Activated CD4-positive, alpha-beta T cell treated with anti-CD3 and anti-CD28 coated beads, Interleukin-2, amount 10 ng/mL, durations not matched to agents 24 days and 14 days (primary cell): ENCODE measurements at regions of chr21 and their contacts with region 1.

Region 1: DNA sequence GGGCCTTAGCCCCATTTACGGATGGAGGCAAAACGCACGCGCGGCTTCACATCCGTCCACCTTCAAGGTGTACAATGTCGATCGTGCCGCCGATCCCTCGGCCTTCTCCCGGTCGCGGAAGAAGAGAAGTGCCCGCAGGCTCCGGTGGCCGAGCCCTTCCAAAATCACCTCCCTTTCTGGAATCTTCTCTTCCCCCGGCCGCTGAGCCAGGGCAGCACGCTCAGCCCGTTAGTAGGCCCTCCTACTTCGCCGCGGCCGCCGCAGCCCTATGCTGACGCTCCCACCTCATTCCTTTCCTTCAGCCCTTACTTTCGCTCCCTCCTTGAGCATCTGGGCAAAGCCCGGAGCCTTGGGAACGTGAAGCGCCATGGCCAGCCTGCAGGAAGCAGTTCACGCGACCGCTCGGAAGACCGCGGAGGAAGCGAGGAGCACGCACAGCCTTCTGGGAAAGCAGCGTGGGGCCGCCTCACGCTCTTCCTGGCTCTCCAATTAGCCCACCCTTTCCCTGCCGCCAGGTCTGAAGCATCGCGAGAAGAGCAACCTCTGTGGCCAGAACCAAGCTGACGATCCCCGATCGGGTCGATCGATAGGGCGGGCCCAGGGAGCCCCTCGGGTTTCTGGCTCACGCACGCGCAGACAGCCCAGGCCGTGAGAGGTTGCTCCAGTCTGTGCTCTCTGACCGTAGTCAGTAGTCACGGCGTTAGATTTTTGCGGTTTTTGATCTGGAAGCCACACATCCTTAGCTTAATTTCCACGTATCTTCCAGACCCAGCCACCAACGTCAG is at the start of gene CCT8:
- DNase-seq: peak; percentile 99
- H3K4me3 Mint-ChIP-seq: peak within 1 kb of the TSS; percentile 100
- H3K27ac Mint-ChIP-seq: peak within 1 kb of the TSS; percentile 99
- H3K4me1 Mint-ChIP-seq: peaks cover 47% of the 10 kb centered on the region
- H3K27me3 Mint-ChIP-seq: no peaks in the 10 kb centered on the region
- total RNA-seq, gene CCT8: 432 and 438 TPM in 2 replicates

Region 2: DNA sequence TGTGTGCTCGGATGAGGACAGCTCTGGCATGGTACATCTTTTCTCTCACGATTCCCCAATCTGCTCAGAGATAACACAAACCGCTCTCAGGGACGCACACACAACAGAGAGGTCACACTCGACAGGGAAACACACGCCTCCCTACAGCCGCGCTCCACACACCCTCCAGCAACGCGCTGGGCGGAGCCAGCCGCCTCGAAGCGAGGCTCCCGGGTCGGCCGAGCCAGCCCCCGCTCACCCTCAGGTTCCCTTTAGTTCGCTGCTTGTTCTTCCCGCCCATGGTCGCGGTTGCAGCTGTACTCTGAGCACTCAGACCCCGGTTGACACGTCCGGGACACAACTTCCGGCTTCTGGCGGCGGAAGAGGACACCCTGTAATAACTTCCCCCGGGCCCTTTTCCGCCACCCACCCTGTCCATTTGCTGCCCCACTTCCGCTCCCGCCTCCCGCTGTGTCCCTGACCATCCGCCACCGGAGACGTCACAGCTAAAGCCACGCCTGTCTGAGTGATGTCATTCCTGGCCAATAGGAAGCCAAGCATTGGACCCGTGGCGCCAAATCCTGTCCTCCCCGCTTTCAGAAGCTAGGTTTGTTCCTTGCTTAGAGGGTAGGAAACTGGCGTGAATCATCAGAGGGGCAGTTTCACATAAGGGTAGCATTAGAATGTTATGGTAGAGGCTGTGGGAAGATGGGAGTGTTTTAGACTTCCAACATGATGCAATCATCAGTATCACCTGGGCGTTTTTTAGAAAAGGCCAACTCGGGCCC is 80.7 kb before region 1 on chr21 and contains the start of gene LTN1:
- intact Hi-C with region 1: loop called (anchors 1 kb)
- DNase-seq: peak; percentile 100
- H3K4me3 Mint-ChIP-seq: peak within 1 kb of the TSS; percentile 94
- H3K27ac Mint-ChIP-seq: peak within 1 kb of the TSS; percentile 98
- H3K4me1 Mint-ChIP-seq: peaks cover 40% of the 10 kb centered on the region
- H3K27me3 Mint-ChIP-seq: peaks cover 2% of the 10 kb centered on the region
- total RNA-seq, gene LTN1: 25.6 and 31.0 TPM in 2 replicates

Region 3: GRCh38 chr21:29002442-29003144 is 70.8 kb before region 1 on chr21:
- intact Hi-C with region 1: loop called (anchors 1 kb)
- DNase-seq: peak; percentile 99
- H3K4me3 Mint-ChIP-seq: peak overlapping the region; percentile 91
- H3K27ac Mint-ChIP-seq: peak overlapping the region; percentile 96
- H3K4me1 Mint-ChIP-seq: peaks cover 13% of the 10 kb centered on the region
- H3K27me3 Mint-ChIP-seq: no peaks in the 10 kb centered on the region

Region 4: DNA sequence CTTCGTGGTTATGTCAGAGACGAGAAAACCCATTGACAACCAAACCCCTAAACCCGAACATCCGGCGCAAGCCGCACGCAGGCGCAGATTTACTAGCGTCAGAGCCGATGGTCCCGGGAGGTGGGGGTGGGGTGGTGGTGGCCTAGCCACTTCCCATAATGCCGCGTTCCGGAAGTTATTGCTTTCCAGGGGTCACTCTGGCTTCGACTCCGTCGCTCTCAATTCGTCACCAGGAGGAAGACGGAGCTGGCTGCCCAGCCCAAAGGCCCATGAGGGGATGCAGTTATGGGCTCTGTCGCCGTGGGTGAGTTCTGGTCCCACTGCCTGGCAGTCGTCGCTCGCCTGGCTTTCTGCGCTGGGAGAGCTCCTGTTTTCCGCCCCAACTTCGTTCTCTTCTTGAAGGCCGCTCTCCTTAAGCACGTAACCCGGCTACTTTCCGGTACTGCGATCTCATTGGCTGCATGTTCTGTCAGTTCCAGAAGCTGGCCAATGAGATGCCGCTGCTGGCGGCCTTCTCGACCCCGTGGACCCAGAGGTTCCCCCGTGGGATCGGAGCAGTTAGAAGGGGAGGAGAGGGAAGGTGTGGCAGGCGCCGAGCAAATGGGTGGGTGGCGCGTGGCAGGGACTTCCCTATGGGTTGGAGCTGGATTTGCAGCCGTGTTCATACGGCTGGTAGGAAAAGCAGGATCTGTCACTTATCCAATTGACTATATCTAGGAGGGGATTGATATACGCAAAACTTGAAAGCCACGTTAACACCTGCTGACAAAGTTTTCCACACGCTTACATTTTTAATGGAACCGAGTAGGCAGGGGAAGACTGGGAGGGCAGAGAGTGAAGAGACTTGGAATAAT is 48.7 kb before region 1 on chr21 and contains the start of gene USP16:
- intact Hi-C with region 1: loop called (anchors 1 kb)
- DNase-seq: peak; percentile 99
- H3K4me3 Mint-ChIP-seq: peak within 1 kb of the TSS; percentile 93
- H3K27ac Mint-ChIP-seq: peak within 1 kb of the TSS; percentile 99
- H3K4me1 Mint-ChIP-seq: peaks cover 41% of the 10 kb centered on the region
- H3K27me3 Mint-ChIP-seq: no peaks in the 10 kb centered on the region
- total RNA-seq, gene USP16: 45.7 and 46.7 TPM in 2 replicates

Region 5: DNA sequence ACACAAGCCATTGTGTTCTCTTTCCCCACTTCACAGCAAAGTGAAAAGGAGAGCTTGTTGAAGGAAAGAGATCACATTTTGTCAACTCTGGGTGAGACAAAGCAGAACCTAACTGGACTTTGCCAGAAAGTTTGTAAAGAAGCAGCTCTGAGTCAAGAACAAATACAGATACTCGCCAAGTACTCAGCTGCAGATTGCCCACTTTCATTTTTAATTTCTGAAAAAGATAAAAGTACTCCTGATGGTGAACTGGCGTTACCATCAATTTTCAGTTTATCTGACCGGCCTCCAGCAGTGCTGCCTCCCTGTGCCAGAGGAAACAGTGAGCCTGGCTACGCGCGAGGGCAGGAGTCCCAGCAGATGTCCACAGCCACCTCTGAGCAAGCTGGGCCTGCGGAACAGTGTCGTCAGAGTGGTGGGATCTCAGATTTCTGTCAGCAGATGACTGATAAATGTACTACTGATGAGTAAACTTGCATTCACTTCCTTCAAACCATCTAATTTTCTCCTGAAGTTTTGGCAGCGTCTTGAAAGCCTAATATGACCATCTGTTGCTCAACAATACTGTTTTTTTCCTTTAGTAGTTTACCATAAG is 269.0 kb after region 1 on chr21:
- intact Hi-C with region 1: loop called (anchors 5 kb)
- DNase-seq: no peak
- H3K4me3 Mint-ChIP-seq: no peak overlapping the region
- H3K27ac Mint-ChIP-seq: peak overlapping the region; percentile 78
- H3K4me1 Mint-ChIP-seq: peaks cover 27% of the 10 kb centered on the region
- H3K27me3 Mint-ChIP-seq: no peaks in the 10 kb centered on the region